ENCODE measurements at regions of chr19 and their contacts with region 1.

Region 1: GRCh38 chr19:43743022-43743421 is 11.7 kb downstream of the SMG9 start:
- DNase-seq: no peak
- H3K4me3 ChIP-seq: no peak overlapping the region
- H3K27ac ChIP-seq: no peak overlapping the region
- H3K4me1 ChIP-seq: no peaks in the 10 kb centered on the region
- H3K27me3 ChIP-seq: no peaks in the 10 kb centered on the region
- CTCF ChIP-seq: no peak
- EP300 ChIP-seq: no peak
- POLR2A ChIP-seq: no peak
- RAD21 ChIP-seq: no peak

Region 2: GRCh38 chr19:43723588-43723987 is 19.4 kb before region 1 on chr19:
- CTCF ChIA-PET with region 1: interaction called, 25 read pairs
- POLR2A ChIA-PET with region 1: interaction called, 6 read pairs
- DNase-seq: no peak
- H3K4me3 ChIP-seq: no peak overlapping the region
- H3K27ac ChIP-seq: no peak overlapping the region
- H3K4me1 ChIP-seq: no peaks in the 10 kb centered on the region
- H3K27me3 ChIP-seq: no peaks in the 10 kb centered on the region
- CTCF ChIP-seq: peak; percentile 40 to 48 (median 41)
- EP300 ChIP-seq: no peak
- POLR2A ChIP-seq: no peak
- RAD21 ChIP-seq: peak; percentile 33 to 48; a peak in 3 of 4 replicates

Region 3: DNA sequence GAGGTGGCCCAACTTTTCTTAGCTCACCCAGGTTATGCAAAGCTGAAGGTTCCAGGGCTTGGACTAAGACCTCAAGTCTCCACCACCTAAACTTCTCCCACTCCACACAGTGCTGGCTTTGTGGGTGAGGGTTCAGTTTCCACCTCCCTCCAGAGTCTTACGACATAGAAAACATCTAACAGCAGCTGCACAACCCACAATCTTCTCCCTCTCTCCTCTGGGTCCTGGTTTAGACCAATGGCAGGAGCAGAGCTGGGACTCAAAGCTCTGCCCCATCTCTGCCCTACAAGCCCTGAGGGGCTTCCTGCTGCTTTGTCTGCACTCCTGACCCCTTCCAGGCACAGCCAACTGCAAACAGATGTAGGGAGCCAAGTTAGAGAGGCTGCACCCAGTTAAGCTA is 11.2 kb before region 1 on chr19:
- CTCF ChIA-PET with region 1: interaction called, 11 read pairs
- POLR2A ChIA-PET with region 1: interaction called, 6 read pairs
- DNase-seq: no peak
- H3K4me3 ChIP-seq: no peak overlapping the region
- H3K27ac ChIP-seq: no peak overlapping the region
- H3K4me1 ChIP-seq: no peaks in the 10 kb centered on the region
- H3K27me3 ChIP-seq: no peaks in the 10 kb centered on the region
- CTCF ChIP-seq: no peak
- EP300 ChIP-seq: no peak
- POLR2A ChIP-seq: no peak
- RAD21 ChIP-seq: no peak